ENCODE measurements at regions of chr15 and their contacts with region 1.

Region 1: GRCh38 chr15:66386204-66387123 is at the start of gene MAP2K1:
- DNase-seq: peak; percentile 100
- H3K4me3 Mint-ChIP-seq: peak within 1 kb of the TSS; percentile 98
- H3K27ac Mint-ChIP-seq: peak within 1 kb of the TSS; percentile 100
- H3K4me1 Mint-ChIP-seq: peaks cover 41% of the 10 kb centered on the region
- H3K27me3 Mint-ChIP-seq: no peaks in the 10 kb centered on the region
- total RNA-seq, gene MAP2K1: 98.9 and 106 TPM in 2 replicates

Region 2: GRCh38 chr15:65980824-65981456 is 405.5 kb before region 1 on chr15:
- intact Hi-C with region 1: no loop called
- DNase-seq: peak; percentile 73
- H3K4me3 Mint-ChIP-seq: no peak overlapping the region
- H3K27ac Mint-ChIP-seq: no peak overlapping the region
- H3K4me1 Mint-ChIP-seq: peaks cover 6% of the 10 kb centered on the region
- H3K27me3 Mint-ChIP-seq: peaks cover 39% of the 10 kb centered on the region

Region 3: DNA sequence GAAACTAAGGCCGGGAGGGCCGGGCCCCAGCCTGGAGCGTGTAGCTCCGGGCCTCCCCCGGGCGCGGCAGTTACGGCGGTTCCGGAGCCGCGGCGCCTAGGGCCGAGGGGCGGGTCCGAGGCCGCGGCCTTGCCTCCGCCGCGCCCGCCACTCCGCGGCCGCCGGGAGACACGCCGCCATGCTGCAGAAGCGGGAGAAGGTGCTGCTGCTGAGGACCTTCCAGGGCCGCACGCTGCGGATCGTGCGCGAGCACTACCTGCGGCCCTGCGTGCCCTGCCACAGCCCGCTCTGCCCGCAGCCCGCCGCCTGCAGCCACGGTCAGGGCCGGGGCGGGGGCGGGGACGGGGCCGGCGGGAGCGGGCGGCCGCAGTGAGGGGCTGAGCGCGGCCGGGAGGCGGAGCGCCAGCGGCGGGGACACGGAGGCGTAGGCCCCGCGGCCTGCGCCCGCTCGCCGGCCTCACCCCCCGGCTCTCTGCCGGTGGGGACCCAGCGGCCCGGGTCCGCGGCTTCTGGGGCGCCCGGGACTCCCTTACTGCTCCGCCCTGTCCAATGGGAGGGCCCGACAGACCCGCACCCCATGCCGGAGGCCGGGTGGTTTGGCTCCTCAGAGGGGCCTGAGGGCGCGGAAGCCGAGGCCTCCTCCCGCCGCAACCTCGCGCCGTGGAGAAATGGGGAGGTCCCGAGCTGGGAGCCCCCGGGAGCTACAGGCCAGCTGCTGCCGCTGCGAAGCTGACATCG is 92.9 kb before region 1 on chr15 and contains the start of gene DIS3L:
- intact Hi-C with region 1: loop called (anchors 1 kb)
- DNase-seq: peak; percentile 93
- H3K4me3 Mint-ChIP-seq: peak within 1 kb of the TSS; percentile 92
- H3K27ac Mint-ChIP-seq: peak within 1 kb of the TSS; percentile 94
- H3K4me1 Mint-ChIP-seq: peaks cover 40% of the 10 kb centered on the region
- H3K27me3 Mint-ChIP-seq: peaks cover 2% of the 10 kb centered on the region
- total RNA-seq, gene DIS3L: 48.6 and 57.2 TPM in 2 replicates

Region 4: DNA sequence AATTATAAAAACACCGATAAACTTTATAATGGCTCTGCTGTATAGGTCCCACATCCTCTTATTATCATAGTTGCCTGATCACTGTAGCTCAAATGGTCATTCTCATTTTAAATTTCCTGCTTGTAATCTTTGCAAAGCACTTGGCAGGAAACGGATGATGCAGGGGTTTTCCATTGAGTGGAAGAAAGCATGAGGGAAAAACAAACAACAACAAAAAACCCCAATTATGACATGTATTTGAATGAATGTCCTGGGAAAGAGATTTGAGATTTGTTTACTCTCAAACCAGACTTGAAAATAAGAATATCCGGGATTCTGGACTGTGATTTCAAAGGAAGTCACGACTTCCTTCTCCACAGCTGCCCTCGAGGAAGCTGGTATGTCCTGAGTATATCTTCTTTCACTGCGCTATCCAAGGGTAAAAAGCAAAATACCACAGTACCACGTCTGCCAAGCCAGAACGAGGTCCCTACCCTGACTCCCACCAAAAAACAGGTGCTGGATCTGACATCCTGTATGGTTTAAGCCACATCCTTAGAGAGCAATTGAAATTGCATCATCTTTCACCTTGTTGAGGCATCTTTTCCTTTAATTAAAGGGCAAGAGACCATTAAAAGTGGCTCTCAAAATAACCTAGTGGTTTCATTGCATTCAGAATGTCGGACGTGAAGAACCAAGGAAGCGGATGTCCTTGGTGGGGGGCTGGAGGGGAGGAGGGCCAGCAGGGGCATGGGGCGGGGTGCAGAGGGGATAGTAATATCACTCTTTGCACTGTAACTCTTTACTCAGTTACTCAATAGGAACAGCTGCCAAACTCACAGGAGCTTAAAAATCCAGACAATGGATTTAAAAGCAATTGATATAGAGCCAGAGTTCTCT is 16.5 kb before region 1 on chr15:
- intact Hi-C with region 1: loop called (anchors 1 kb)
- DNase-seq: peak; percentile 82
- H3K4me3 Mint-ChIP-seq: peak overlapping the region; percentile 80
- H3K27ac Mint-ChIP-seq: peak overlapping the region; percentile 96
- H3K4me1 Mint-ChIP-seq: peaks cover 14% of the 10 kb centered on the region
- H3K27me3 Mint-ChIP-seq: no peaks in the 10 kb centered on the region

Region 5: GRCh38 chr15:66411190-66411589 is 24.7 kb after region 1 on chr15:
- intact Hi-C with region 1: no loop called
- DNase-seq: peak; percentile 67
- H3K4me3 Mint-ChIP-seq: peak overlapping the region; percentile 78
- H3K27ac Mint-ChIP-seq: peak overlapping the region; percentile 54
- H3K4me1 Mint-ChIP-seq: peaks cover 67% of the 10 kb centered on the region
- H3K27me3 Mint-ChIP-seq: no peaks in the 10 kb centered on the region

Region 6: GRCh38 chr15:66472176-66472999 is 85.9 kb after region 1 on chr15:
- intact Hi-C with region 1: loop called (anchors 2 kb)
- DNase-seq: peak; percentile 88
- H3K4me3 Mint-ChIP-seq: peak overlapping the region; percentile 64
- H3K27ac Mint-ChIP-seq: peak overlapping the region; percentile 86
- H3K4me1 Mint-ChIP-seq: peaks cover 51% of the 10 kb centered on the region
- H3K27me3 Mint-ChIP-seq: no peaks in the 10 kb centered on the region

Region 7: DNA sequence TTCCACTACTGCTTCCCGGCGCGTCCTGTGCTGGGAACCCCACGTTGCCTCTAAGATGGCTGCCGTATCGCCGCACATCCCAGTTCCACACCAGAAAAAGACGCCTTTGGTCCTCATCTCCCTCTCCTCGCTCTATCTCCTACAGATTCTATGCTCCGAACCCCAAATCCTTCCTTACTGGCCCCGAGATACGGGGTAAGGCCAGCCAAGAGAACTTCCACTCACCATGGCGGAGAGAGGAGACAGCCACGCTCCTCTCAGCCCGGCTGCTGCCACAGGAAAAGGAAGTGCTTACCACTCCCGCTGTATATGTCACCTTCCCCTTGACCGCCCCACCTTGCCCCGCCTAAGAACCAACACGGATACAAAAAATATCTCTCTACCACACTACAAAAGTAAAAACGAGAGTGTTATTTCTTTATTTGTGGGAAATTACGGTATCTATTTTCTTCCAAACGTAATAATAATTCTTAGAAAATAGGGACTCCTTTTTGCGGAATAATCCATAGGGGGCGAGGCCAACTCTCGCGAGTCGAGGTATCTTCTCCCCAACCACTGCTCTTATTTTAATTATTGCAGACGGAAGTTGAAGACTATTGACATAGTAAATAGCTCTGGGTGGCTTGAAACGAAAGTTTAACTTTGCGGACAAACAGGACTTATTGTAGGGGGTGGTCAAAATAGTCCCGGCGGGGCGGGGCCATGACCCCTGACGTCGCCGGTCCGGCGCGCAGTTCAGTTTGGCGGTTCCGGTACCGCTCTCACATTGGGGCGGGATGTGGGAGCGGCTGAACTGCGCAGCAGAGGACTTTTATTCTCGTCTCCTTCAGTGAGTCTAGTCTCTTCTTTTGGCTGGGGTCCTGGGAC is 118.3 kb after region 1 on chr15 and contains the starts of genes RPL4 and ZWILCH:
- intact Hi-C with region 1: loop called (anchors 2 kb)
- DNase-seq: peak; percentile 95
- H3K4me3 Mint-ChIP-seq: peak within 1 kb of the TSS; percentile 92
- H3K27ac Mint-ChIP-seq: peak within 1 kb of the TSS; percentile 98
- H3K4me1 Mint-ChIP-seq: peaks cover 48% of the 10 kb centered on the region
- H3K27me3 Mint-ChIP-seq: no peaks in the 10 kb centered on the region
- total RNA-seq, gene RPL4: 3,393 and 3,435 TPM in 2 replicates
- total RNA-seq, gene ZWILCH: 37.1 and 41.1 TPM in 2 replicates

Measured in activated CD4-positive, alpha-beta T cell treated with anti-CD3 and anti-CD28 coated beads, Interleukin-2, amount 10 ng/mL, durations not matched to agents 24 days and 14 days (primary cell).